ENCODE measurements at regions of chr5 and their contacts with region 1.

Region 1: DNA sequence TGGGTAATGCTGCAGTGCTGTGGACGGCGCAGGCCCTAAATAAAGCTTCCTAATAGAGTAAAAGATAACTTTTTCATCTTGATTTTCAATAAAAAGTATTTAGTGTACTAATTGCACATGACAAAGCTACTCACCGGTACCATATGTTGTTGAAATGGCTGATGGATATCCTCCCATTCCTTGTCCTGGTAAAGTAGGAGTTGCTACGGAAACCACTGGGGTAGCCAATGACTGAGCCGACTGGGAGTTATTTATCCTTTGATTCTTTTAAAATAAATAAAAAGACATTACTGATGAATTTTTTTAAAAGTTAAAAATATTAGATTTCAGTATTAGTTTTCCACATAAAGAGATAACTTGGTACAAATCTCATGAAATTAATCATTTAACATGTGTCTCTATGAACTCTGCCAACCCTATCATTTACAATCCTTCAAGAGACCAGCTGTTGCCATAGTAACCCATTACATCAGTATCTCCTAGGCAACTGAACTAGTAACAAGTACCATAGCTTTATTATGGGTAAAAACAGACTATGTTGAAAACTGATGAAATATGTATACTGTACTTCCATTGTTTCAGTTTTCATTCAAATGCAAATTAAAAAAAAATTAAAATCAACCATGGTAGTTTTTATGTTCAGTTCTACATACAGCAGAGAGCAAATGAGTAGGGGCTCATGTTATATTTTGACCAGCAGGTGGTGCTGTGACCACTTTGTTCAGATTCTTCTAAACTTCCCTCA is 153.7 kb downstream of the MEF2C start:
- DNase-seq: peak; percentile 82
- H3K4me3 ChIP-seq: no peak overlapping the region
- H3K27ac ChIP-seq: no peak overlapping the region
- H3K4me1 ChIP-seq: peaks cover 27% of the 10 kb centered on the region
- CTCF ChIP-seq: peak; percentile 96

Region 2: DNA sequence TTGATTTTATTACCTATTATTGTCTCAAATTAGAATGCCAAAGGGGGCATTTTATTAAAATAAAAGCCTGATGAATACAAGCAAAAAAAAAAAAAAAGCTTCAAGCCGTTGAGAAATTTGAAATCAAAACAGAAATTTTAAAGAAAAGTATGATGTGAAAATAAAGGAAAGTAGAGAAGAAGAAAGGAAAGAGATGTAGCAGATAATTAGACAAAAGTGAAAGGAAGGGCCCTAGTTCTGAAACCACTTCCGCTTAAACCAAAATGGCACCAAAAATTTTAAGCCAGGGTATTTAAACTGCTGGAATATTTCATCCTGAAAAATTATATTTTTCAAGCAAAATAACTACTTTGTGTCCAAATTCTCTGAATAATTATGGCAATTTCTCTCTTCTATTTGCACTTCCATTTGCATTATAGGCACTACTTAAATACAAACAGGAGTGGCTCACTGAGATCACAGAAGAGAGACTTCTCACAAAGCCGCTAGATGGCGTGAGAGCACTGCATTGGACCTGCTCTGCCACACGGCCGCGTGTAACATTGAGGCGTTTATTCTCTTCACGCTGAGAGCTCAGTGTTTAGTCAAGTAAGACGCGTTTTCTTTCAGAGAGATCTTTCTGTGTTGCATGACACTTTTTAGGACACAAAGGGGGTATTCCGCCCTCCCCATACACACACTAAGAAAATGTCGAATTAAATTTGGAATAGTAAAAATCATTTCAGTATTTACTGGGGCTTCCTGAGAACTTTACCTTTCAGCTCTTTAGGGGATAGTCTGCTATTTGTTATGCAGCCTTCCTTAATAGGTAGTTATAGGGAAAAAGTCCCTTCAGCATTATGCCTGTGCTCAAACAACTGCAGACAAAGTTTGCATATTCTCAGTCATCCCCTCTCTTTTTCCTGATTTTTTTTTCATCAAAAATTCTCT is 948.2 kb before region 1 on chr5:
- CTCF ChIA-PET with region 1: no interaction called
- POLR2A ChIA-PET with region 1: interaction called, 3 read pairs
- intact Hi-C with region 1: loop called (anchors 10 kb)
- DNase-seq: peak; percentile 83
- H3K4me3 ChIP-seq: no peak overlapping the region
- H3K27ac ChIP-seq: no peak overlapping the region
- H3K4me1 ChIP-seq: no peaks in the 10 kb centered on the region
- CTCF ChIP-seq: peak; percentile 95

Region 3: GRCh38 chr5:88698290-88698689 is 31.0 kb before region 1 on chr5:
- CTCF ChIA-PET with region 1: no interaction called
- POLR2A ChIA-PET with region 1: no interaction called
- intact Hi-C with region 1: no loop called
- DNase-seq: no peak
- H3K4me3 ChIP-seq: no peak overlapping the region
- H3K27ac ChIP-seq: no peak overlapping the region
- H3K4me1 ChIP-seq: no peaks in the 10 kb centered on the region
- CTCF ChIP-seq: no peak

Region 4: GRCh38 chr5:88819301-88819999 is 90.2 kb after region 1 on chr5:
- CTCF ChIA-PET with region 1: interaction called, 6 read pairs
- POLR2A ChIA-PET with region 1: interaction called, 21 read pairs
- intact Hi-C with region 1: no loop called
- DNase-seq: no peak
- H3K4me3 ChIP-seq: no peak overlapping the region
- H3K27ac ChIP-seq: no peak overlapping the region
- H3K4me1 ChIP-seq: peaks cover 50% of the 10 kb centered on the region
- CTCF ChIP-seq: no peak

Region 5: DNA sequence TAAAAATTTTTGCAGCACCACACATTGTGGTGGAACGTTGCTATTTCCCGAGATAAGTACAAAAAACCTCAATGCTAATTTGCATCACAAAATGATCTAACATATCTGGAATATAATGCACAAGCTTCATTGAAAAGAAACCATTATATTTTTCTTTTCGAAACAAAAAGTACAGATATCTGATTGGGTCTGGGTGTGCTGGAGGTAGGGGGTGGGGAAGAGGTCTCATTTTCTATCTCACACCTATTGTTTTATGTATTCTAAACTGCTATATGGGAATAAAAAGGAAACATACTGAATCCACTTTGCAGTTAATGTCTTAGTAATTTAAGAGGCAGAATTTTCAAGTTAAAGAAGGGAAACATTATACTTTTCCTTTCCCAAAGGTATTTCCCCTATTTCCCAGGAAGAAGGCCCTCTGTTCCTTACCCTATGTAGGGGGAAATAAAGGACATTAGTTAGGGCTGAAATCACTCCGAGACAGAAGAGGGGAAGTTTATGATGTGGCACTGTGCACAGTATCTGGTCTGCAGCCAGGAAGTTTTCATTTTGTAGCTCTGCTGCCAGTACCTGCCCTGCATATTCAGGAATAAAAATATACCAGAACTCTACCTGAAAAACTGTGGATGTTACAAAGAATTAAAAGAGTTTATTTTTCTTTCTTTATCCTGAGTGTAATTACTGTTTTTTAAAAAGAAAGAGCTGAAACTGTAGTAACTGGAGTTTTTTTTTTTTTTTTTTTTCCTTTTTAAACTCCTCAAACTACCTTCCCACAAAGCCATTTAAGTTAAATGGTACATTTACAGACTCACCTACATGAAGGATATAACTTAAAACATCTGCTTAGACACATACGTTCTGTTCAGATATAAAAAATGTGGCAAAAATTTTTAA is 146.3 kb after region 1 on chr5:
- CTCF ChIA-PET with region 1: interaction called, 3 read pairs
- POLR2A ChIA-PET with region 1: interaction called, 15 read pairs
- intact Hi-C with region 1: loop called (anchors 1 kb)
- DNase-seq: peak; percentile 56
- H3K4me3 ChIP-seq: peak overlapping the region; percentile 55
- H3K27ac ChIP-seq: peak overlapping the region; percentile 33
- H3K4me1 ChIP-seq: peaks cover 55% of the 10 kb centered on the region
- CTCF ChIP-seq: no peak

Region 6: GRCh38 chr5:89055695-89056085 is 326.4 kb after region 1 on chr5:
- CTCF ChIA-PET with region 1: no interaction called
- POLR2A ChIA-PET with region 1: interaction called, 3 read pairs
- intact Hi-C with region 1: loop called (anchors 10 kb)
- DNase-seq: no peak
- H3K4me3 ChIP-seq: no peak overlapping the region
- H3K27ac ChIP-seq: no peak overlapping the region
- H3K4me1 ChIP-seq: no peaks in the 10 kb centered on the region
- CTCF ChIP-seq: no peak

Region 7: GRCh38 chr5:90264689-90265544 is 1535.7 kb after region 1 on chr5:
- CTCF ChIA-PET with region 1: no interaction called
- POLR2A ChIA-PET with region 1: no interaction called
- intact Hi-C with region 1: loop called (anchors 5 kb)
- DNase-seq: peak; percentile 64
- H3K4me3 ChIP-seq: no peak overlapping the region
- H3K27ac ChIP-seq: no peak overlapping the region
- H3K4me1 ChIP-seq: no peaks in the 10 kb centered on the region
- CTCF ChIP-seq: peak; percentile 99

Measured in OCI-LY7 (cell line).